Right ventricle myocardium superior (tissue), 1 donor: ENCODE measurements at regions of chr3 and their contacts with region 1.

Region 1: GRCh38 chr3:71583566-71584449 is at the start of gene FOXP1:
- DNase-seq: peak; percentile 87
- ATAC-seq: peak; percentile 76
- total RNA-seq, gene FOXP1: 36.3 TPM

Region 2: GRCh38 chr3:70716832-70717231 is 867.0 kb before region 1 on chr3:
- intact Hi-C with region 1: loop called (anchors 5 kb)
- DNase-seq: peak; percentile 56
- ATAC-seq: no peak

Region 3: DNA sequence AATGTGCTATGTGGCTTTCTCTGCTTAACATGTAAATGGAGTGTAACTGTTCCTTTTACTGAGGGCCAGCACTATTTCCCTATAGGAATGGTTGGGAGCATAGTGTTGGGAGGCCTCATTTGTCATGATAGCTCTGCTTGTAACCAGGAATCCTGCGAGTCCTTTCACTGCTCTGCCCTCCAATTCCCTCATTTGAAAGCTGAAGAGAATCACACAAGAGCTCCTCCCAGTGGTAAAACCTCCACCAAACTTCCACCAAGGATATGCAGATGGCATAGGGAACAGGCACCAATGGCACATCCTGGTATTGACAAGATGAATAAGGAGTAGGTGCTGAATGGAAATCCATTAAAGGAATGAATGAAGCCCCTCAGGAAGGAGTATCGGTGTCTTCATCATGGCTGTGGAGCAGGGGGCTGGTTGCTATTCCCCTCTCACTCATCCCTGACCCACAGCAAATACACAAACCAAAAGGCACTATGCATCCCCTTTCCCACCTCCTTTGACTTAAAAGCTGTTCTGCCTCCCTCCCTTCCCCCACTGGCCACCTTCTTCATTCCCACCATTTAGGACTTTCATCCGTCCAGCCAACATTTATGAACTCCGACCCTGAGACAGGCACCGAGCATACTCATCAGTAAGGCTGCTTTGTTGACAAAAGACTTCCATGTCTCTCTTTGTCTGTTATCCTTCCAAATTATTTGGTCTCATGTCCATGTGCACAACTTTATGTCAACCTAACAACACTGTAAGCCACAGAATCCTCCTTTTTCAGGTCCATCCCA is 561.1 kb before region 1 on chr3:
- intact Hi-C with region 1: loop called (anchors 10 kb)
- DNase-seq: no peak
- ATAC-seq: no peak

Region 4: DNA sequence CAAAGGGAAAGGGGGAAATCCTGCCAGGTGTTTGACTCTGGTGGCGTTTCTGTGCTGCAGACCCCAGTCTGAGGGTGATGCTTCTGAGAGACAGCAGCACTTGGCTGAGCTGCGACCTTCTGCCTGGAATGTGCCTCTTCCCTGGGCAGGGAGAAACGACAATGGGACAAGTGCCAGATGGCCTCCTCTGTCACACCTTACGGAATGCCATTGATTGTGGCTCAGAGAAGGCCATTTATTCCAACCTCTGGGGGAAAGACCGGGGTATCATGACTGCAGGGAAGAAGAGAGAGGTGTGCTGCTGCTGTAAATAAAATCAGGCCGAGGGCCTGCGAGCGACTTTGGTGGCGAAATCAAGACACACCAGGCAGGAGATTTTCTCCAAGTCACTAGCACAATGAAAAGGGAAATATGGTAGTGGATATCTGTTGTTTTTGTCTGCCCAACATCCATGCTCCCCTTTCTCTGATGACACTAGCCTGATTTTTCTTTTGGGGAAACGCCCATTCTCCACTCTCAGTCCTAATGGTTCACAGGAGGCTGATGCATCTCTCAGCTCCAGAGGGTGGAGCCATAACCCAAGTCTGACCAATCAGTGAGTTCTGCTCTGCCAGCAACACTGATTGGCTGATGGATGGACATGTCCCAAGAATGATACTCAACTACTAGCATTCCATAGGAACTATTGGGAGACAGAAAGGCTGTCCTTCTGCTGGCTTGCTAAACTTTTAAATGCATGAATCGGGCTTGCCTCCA is 336.4 kb before region 1 on chr3:
- intact Hi-C with region 1: loop called (anchors 10 kb)
- DNase-seq: no peak
- ATAC-seq: peak; percentile 16